ENCODE measurements at regions of chr16 and their contacts with region 1.

Region 1: GRCh38 chr16:70470927-70471341 is 16.5 kb downstream of the FCSK start:
- DNase-seq: peak; percentile 76
- ATAC-seq: peak; percentile 63
- H3K4me3 Mint-ChIP-seq: no peak overlapping the region
- H3K27ac Mint-ChIP-seq: no peak overlapping the region
- H3K4me1 Mint-ChIP-seq: peaks cover 3% of the 10 kb centered on the region; the same call in 1 of the 2 replicates
- H3K27me3 Mint-ChIP-seq: no peaks in the 10 kb centered on the region
- CTCF ChIP-seq: no peak

Region 2: GRCh38 chr16:70364399-70364798 is 106.5 kb before region 1 on chr16:
- CTCF ChIA-PET with region 1: interaction called, 17 read pairs
- POLR2A ChIA-PET with region 1: no interaction called
- DNase-seq: no peak
- ATAC-seq: peak; percentile 41
- H3K4me3 Mint-ChIP-seq: no peak overlapping the region
- H3K27ac Mint-ChIP-seq: no peak overlapping the region
- H3K4me1 Mint-ChIP-seq: no peaks in the 10 kb centered on the region
- H3K27me3 Mint-ChIP-seq: no peaks in the 10 kb centered on the region
- CTCF ChIP-seq: no peak

Region 3: DNA sequence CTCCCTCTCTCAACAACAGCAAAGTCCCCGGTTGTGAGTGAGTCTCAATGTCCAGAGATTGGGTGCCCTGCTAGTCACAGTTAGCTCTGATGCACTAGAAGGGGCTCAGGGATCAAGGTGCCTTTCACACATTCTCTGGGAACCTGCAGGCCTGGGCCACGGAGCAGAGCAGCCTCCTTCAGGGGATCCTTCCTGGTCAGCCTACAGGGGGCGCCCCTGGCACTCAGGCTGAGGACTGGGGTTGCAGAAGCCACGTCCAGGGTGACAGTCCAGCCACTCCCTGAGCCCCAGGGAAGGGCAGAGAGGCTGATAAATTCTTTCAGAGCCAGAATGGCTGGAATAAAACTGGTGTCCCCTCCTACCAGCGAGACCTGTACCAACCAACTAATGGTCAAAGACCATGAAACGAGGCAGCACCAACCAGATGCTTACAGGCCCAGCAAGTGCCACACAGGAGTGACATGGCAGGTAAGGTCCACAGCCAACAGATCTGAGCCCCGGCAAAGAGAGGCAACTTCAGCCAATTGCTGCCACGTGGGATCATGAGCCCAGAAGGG is 75.5 kb before region 1 on chr16:
- CTCF ChIA-PET with region 1: interaction called, 14 read pairs
- POLR2A ChIA-PET with region 1: no interaction called
- DNase-seq: peak; percentile 93
- ATAC-seq: peak; percentile 97
- H3K4me3 Mint-ChIP-seq: no peak overlapping the region
- H3K27ac Mint-ChIP-seq: peak overlapping the region; percentile 68; the same call in 1 of the 2 replicates
- H3K4me1 Mint-ChIP-seq: no peaks in the 10 kb centered on the region
- H3K27me3 Mint-ChIP-seq: no peaks in the 10 kb centered on the region
- CTCF ChIP-seq: peak; percentile 93

Region 4: GRCh38 chr16:70416748-70417616 is 54.0 kb before region 1 on chr16:
- CTCF ChIA-PET with region 1: interaction called, 17 read pairs
- POLR2A ChIA-PET with region 1: no interaction called
- DNase-seq: no peak
- ATAC-seq: no peak
- H3K4me3 Mint-ChIP-seq: no peak overlapping the region
- H3K27ac Mint-ChIP-seq: peak overlapping the region; percentile 79; the same call in 1 of the 2 replicates
- H3K4me1 Mint-ChIP-seq: peaks cover 59% of the 10 kb centered on the region
- H3K27me3 Mint-ChIP-seq: no peaks in the 10 kb centered on the region
- CTCF ChIP-seq: no peak

Region 5: GRCh38 chr16:70438969-70439862 is 31.7 kb before region 1 on chr16 and contains the start of gene ST3GAL2:
- CTCF ChIA-PET with region 1: interaction called, 16 read pairs
- POLR2A ChIA-PET with region 1: no interaction called
- DNase-seq: peak; percentile 98
- ATAC-seq: peak; percentile 85
- H3K4me3 Mint-ChIP-seq: peak within 1 kb of the TSS; percentile 99
- H3K27ac Mint-ChIP-seq: peak within 1 kb of the TSS; percentile 96
- H3K4me1 Mint-ChIP-seq: peaks cover 37% of the 10 kb centered on the region
- H3K27me3 Mint-ChIP-seq: no peaks in the 10 kb centered on the region
- CTCF ChIP-seq: no peak
- total RNA-seq, gene ST3GAL2: 46.0 to 49.4 TPM (median 46.2 TPM) in 3 replicates

Region 6: DNA sequence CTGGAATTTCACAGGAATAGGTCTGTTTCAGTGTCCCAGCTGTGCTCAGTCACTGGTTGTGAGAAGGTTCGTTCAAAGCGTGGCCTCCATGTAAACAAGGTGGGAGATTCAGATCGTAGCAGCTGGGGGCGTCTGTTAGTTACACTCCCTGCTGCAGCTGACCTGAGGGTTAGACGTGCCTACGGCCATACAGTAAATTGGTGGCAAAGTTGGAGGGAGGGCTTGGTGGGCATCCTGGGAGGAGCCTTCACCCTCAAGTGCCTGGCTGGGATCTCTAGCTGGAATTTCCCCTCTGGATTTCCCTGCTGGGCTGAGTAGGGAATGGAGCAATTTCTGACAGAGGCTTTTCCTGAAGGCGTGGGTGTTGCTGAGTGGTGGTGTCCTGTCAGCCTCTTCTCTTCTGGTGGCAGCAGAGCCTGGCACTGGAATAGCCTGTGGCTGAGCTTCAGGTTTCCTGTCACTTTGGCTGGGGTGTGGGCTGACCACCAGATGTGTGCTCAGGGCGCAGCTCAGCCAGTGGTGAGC is 10.1 kb before region 1 on chr16:
- CTCF ChIA-PET with region 1: interaction called, 28 read pairs
- POLR2A ChIA-PET with region 1: no interaction called
- DNase-seq: no peak
- ATAC-seq: peak; percentile 34
- H3K4me3 Mint-ChIP-seq: no peak overlapping the region
- H3K27ac Mint-ChIP-seq: peak overlapping the region; percentile 33; the same call in 1 of the 2 replicates
- H3K4me1 Mint-ChIP-seq: no peaks in the 10 kb centered on the region
- H3K27me3 Mint-ChIP-seq: no peaks in the 10 kb centered on the region
- CTCF ChIP-seq: no peak

Measured in WTC11 (cell line).